ENCODE measurements at regions of chr11 and their contacts with region 1.

Region 1: DNA sequence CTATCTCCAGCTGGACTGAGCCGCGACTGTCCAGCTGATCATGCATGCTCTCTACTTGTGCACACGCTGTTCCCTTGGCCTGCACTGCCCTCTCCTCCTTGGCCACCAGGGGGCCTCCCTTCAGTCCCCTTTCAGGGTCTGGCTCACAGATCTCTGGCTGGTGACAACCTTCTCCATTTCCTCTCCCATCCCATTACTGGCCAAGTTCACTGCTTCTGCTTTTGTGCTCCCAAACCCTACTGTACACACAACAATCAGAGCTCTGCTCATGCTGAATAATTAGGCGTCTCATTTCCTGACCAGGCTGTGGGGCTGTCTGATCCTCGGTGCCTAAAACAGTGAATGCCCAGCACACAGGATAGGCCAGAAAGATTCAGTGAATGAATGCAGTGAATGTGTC is 224.0 kb upstream of the NARS2 start:
- DNase-seq: no peak
- H3K4me3 ChIP-seq: no peak overlapping the region
- H3K27ac ChIP-seq: peak overlapping the region; percentile 49
- H3K27me3 ChIP-seq: no peaks in the 10 kb centered on the region
- CTCF ChIP-seq: peak; percentile 87

Region 2: DNA sequence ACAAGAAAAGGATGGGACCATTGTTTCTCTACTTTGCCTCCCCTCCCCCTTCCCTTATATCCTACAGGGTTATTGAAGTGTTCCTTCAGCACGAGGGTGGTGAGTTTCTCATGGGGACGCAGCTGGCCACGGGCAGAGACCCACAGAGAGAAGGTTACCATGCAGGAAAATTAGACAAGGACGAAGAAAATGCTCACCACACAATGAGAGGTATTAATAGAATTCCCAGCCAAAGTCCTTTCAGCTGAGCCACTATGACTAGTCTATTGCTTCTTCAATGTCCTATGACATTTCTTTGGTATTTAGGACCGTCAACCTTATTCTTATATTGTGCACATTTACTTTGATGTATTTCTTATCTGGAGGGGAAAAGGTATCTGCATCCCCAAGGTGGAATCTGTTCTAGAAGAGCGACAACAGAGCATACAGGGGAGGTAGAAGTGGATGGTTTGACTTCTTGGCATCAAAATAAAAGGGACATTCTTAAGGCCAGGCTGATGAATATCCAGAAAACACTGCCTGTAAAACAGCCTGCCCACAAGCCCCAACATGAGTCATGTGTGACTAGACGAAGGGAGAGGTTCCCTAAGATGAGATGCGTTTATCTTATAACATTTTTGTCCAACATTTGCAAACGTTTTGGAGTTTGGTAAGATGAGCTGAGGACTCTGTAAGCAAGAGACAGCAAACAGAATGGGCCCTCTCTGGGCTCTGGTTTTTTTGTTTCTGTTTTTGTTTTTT is 14.2 kb before region 1 on chr11:
- CTCF ChIA-PET with region 1: interaction called, 15 read pairs
- POLR2A ChIA-PET with region 1: interaction called, 5 read pairs
- DNase-seq: peak; percentile 70
- H3K4me3 ChIP-seq: no peak overlapping the region
- H3K27ac ChIP-seq: peak overlapping the region; percentile 81
- H3K27me3 ChIP-seq: no peaks in the 10 kb centered on the region
- CTCF ChIP-seq: no peak

Region 3: DNA sequence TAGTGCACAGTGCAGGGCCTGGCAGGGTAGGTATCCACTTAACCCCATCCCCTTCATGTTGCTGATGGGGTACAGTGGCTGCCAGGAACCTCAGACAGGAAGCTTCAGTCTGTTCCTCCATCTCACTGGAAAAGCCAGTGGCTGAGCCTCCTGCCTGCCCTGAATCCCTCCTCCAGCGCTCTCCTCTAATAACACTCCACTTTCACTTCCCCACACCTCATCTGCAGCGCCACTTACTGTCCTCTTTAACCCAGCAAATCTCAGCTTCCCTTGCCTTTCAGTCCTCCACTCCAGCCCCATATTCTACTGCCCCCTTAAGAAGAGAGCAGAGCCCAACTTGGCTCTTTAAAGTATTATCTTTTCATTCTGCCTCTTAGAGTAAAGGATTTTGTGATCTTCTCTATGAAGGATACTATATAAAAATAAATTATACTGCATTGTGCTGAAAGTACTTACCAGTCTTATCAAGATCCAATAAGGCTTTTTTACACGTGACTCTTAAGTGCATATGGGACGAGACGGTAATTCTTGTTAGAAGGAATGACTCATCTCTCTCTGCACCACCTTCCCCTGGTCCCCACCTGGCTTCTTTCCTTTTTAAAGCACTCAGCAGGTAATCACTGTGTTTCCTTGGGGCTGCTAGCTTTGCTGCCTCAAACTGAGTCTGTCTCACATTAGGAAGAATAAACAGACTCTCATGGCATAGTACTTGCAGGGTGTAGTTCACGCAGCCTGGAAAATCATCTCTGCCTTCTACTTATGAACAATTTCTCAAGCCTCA is 14.0 kb after region 1 on chr11:
- CTCF ChIA-PET with region 1: interaction called, 54 read pairs
- POLR2A ChIA-PET with region 1: interaction called, 31 read pairs
- DNase-seq: no peak
- H3K4me3 ChIP-seq: no peak overlapping the region
- H3K27ac ChIP-seq: peak overlapping the region; percentile 13
- H3K27me3 ChIP-seq: no peaks in the 10 kb centered on the region
- CTCF ChIP-seq: peak; percentile 33

Region 4: DNA sequence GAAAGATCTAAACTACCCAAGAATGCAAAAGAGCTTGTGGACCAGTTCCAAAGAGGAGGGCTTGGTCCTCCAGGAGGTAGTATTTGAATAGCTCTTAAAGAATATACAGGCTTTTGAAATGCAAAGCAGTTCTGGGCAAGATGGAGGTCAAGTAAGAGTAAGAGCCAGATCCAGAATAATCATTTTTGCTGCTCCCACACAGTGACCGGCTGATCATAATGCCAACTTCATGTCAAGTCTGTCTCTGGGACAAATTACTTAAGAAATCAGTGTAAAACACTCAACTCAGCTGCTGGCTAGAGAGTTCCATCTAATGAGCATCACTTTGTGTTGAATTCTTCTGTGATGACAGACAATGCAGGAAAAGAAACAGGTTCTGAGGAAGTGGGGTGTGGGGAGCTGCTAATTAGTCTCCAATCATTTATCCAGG is 26.9 kb after region 1 on chr11:
- CTCF ChIA-PET with region 1: interaction called, 10 read pairs
- POLR2A ChIA-PET with region 1: interaction called, 11 read pairs
- DNase-seq: no peak
- H3K4me3 ChIP-seq: no peak overlapping the region
- H3K27ac ChIP-seq: no peak overlapping the region
- H3K27me3 ChIP-seq: no peaks in the 10 kb centered on the region
- CTCF ChIP-seq: 0 out of 2 replicates have a peak, but pooled peaks have one; percentile 6

Region 5: DNA sequence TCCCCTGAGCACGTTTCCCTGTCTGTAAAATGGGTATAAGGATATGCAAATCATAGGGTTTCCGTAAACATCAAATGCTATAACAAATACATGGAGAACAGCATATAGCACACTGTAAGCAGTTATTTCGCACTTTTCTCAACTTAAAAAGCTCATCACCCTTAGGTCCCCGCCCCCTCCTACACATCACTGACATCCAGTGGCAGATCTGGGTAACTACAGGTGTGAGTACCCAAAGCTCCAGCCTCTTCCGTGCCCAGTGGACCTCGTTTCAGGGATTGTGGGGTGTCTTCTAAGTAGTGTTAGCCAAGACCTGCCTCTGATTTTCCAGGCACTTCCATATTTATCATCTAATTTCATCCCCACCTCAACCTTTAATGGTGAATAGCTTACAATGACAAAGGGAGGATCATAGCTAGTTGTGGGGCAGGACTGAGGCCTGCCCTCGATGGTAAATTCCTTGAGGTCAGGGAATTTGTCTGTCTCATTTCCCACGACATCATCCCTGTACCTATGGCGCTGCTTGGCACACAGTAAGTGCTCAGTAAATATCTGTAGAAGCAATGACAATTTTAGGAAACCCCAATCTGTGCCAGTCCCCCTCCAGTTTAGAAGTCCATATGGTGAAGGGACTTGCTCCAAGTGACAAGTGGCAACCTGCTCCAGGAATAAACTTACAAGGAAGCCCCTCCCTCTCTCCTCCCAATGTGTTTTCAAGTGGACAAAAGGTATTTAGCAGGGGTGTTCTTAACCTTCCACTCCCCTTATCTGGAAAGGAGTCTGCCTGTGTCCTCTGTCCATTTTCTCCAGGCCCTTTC is 301.6 kb after region 1 on chr11:
- CTCF ChIA-PET with region 1: interaction called, 14 read pairs
- POLR2A ChIA-PET with region 1: no interaction called
- DNase-seq: no peak
- H3K4me3 ChIP-seq: no peak overlapping the region
- H3K27ac ChIP-seq: no peak overlapping the region
- H3K27me3 ChIP-seq: no peaks in the 10 kb centered on the region
- CTCF ChIP-seq: peak; percentile 88